ENCODE measurements at regions of chr7 and their contacts with region 1.

Region 1: DNA sequence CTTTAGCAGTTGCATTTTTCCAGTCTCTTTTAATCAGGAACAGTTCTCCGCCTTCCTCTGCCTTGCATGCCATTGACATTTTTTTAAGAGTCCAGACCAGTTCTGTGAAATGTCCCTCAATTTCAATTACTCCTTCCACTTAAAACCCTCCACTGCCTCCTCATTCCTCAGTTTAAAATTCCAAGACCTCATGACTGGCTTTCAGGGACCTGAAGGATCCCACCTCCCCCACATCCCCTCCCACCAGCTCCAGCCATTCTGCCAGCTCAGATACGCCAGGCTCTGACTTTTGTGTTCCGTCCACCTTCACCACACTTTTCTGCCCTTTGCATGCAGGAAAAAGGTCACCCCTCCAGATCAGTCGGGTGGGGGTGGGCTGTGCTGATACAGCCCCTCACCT is 8.7 kb downstream of the TNRC18 start:
- DNase-seq: no peak
- ATAC-seq: no peak
- H3K4me3 Mint-ChIP-seq: no peak overlapping the region
- H3K27ac Mint-ChIP-seq: no peak overlapping the region
- H3K4me1 Mint-ChIP-seq: peaks cover 32% of the 10 kb centered on the region
- H3K27me3 Mint-ChIP-seq: peaks cover 69% of the 10 kb centered on the region
- CTCF ChIP-seq: no peak

Region 2: DNA sequence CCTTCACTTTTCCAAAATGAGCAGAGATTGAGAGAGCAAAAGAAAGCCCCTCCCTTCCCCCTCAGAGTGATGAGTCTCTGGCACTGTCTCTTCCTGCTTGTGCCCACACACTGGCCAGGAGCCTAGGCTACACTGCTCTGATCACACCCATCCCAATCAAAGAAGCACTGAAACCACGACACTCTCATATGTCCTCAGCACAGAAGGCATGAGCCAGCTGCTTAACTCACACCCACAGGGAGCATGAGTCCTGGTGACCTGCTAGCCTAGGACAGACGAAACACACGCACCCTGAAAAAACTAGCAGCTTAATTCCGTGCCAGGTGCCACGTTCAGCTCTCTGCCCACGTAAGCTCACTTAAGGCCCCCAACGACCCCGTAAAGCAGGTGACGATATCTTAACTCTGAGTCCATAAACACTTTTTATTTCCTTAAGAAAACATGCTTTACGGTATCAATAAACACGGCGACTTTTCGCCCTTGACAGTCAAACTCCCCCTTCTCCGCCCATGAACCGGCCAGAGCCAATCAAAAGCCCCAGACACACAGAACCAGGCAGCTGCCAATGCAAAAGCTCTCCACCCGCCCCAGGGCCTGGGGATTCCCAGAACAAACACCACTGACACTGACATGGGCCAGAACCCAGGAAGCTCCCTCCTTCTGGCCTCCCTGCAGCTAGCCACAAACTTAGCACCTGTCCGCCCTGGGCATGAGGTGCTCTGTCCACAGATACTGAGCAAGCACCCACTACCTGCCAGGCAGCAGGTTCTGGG is 60.3 kb before region 1 on chr7:
- CTCF ChIA-PET with region 1: interaction called, 4 read pairs
- POLR2A ChIA-PET with region 1: interaction called, 11 read pairs
- DNase-seq: peak; percentile 58
- ATAC-seq: peak; percentile 63
- H3K4me3 Mint-ChIP-seq: no peak overlapping the region
- H3K27ac Mint-ChIP-seq: peak overlapping the region; percentile 6; the same call in 1 of the 2 replicates
- H3K4me1 Mint-ChIP-seq: peaks cover 31% of the 10 kb centered on the region
- H3K27me3 Mint-ChIP-seq: peaks cover 40% of the 10 kb centered on the region
- CTCF ChIP-seq: no peak

Measured in WTC11 (cell line).